Right ventricle myocardium inferior (tissue), 1 donor: ENCODE measurements at regions of chr9 and their contacts with region 1.

Region 1: GRCh38 chr9:113591001-113591898 is 127.7 kb downstream of the RGS3 start:
- DNase-seq: peak; percentile 86
- ATAC-seq: peak; percentile 26

Region 2: DNA sequence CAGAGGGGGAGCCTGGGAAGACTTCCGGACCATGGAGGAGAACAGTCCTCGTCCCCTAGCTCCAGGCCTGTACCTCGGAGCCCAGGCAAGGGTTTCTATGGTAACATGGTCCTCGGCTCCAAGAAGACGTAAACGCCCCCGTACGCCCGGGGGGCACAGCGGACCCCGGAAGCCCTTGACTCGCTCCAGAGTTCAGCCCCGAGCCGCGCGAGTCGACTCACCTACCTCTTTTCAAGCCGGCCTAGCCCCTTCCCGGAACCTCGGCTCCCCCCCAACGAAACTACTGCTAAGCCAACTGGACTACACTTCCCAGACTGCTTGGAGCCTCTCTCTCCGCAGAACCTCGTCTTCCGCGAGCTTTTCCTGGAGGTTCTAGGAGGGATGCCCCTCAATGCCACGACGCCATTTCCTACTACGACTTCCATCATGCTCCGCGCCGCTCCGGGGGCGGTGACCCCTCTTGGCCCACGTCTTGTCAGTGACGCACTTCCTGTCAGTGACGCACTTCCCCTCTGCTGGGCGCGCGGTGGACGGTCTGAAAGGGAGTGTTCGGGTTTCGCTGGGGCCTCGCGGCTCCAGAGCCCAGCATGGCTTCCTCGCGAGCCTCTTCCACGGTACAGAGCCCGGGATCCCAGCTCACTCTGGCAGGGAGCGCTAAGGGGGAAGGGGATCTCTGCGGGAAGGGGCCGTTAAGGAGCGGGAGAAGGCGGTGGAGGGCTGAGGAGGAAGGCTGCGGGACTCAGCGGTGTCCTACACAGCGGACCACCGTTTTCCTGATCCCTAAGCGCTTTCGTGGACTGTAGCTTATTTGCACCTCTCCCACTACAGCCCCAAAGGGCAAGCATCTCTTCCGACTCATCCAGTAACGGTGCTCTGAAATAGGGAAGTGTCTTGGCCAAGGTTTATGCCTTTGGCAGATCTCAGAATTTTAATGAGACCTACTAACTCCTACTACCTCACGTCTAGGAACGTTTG is 315.8 kb before region 1 on chr9 and contains the starts of genes CDC26 and PRPF4:
- intact Hi-C with region 1: loop called (anchors 5 kb)
- DNase-seq: peak; percentile 98
- ATAC-seq: peak; percentile 97
- total RNA-seq, gene CDC26: 38.3 TPM
- total RNA-seq, gene PRPF4: 11.0 TPM

Region 3: DNA sequence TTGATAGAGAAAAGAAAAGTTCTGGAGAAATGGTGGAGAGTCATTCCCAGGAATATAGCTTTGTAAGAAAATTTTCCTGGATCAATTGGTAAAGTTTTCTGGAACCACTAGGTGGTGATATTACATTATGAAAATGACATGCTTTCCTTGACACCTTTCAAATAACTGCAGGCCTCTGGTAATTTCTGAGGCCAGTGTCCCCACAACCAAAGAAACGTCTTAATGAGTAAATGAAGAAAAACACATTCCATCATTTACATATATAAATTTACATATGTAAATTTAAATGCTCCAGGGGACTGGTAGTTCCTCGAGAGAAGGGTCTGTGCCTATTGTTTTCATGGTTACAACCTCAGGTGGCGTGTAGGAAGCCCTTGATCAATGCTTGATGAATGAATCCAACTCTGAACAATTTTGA is 144.9 kb before region 1 on chr9:
- intact Hi-C with region 1: loop called (anchors 2 kb)
- DNase-seq: no peak
- ATAC-seq: peak; percentile 34

Region 4: DNA sequence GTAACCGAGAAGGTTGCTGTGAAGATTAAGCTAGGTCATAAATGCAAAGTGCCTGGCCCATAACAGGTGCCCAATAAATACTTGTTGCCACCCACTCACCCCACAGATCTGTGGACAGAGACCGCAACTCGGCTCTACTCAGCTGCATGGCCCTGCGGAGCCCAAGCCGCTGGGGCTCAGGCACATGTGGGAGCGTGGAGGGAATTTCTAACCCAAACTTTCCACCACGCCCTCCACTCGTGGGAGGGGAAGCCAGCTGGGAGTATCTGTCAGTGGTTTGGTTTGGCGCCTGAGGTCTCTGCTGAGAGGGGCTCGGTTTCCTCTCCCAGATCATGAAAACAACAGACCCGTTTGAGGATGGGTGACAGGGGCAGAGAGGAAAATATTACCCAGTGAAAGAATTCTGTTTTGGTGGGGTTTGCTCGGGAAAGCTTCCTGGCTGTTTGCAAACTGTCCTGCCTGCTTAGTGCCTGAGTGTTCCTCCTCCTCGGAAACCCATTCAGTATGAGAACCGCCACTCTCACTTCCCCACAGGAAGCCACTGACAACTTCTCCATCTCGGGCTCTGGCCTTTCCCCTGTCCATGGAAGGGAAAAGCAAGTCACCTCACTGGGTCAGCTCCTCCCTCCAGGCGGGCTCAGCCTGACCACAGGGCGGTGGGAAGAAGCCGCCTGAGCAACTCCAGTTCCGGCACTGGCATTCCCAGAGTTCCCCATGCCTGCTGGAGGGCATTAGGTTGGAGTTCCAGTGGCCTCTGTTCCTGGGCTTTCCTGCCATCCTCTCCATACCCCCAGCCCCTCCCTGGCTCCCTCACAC is 67.6 kb before region 1 on chr9:
- intact Hi-C with region 1: loop called (anchors 2 kb)
- DNase-seq: peak; percentile 77
- ATAC-seq: peak; percentile 63

Region 5: GRCh38 chr9:113657703-113658544 is 66.7 kb after region 1 on chr9:
- intact Hi-C with region 1: loop called (anchors 1 kb)
- DNase-seq: peak; percentile 84
- ATAC-seq: peak; percentile 72

Region 6: DNA sequence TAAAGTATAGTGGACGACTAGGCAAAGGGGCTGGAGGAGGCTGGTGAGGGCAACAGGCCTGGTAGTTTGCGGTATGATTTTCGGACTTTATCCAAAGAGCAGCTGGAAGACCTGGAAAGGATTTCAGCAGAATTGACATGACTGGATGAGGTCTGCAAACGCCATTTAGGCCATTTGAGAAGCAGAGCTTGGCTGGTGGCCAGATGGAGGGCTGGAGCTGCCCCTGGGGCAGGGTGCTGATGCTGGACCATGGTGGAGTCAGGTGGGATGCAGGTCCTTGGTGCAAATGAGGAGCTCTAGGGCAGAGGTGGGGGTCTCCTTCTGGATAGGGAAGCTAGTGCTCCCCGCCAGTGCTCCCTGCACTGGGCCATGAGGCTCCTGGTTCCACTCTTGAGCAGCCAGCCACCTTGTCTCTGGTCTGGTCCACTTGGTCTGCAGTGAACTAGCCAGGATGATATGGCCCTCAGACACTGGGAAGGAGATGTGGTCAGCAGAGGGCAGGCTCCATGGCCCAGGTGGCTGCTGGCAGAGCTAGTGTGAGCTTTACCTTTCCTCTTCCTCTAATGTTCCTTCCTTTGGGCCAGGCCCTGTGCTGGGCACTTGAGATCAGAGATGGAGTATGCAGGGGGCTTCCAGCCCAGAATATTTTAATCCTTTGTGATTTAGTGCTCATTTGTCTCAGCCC is 595.5 kb after region 1 on chr9:
- intact Hi-C with region 1: no loop called
- DNase-seq: no peak
- ATAC-seq: no peak